ENCODE measurements at regions of chr12 and their contacts with region 1.

Region 1: GRCh38 chr12:49098035-49098451 is 3.4 kb upstream of the DHH start:
- DNase-seq: peak; percentile 50
- H3K4me3 ChIP-seq: no peak overlapping the region
- H3K27ac ChIP-seq: no peak overlapping the region
- H3K4me1 ChIP-seq: 0 out of 2 replicates have a peak, but pooled peaks cover 4% of the 10 kb centered on the region
- H3K27me3 ChIP-seq: peaks cover 18% of the 10 kb centered on the region

Region 2: DNA sequence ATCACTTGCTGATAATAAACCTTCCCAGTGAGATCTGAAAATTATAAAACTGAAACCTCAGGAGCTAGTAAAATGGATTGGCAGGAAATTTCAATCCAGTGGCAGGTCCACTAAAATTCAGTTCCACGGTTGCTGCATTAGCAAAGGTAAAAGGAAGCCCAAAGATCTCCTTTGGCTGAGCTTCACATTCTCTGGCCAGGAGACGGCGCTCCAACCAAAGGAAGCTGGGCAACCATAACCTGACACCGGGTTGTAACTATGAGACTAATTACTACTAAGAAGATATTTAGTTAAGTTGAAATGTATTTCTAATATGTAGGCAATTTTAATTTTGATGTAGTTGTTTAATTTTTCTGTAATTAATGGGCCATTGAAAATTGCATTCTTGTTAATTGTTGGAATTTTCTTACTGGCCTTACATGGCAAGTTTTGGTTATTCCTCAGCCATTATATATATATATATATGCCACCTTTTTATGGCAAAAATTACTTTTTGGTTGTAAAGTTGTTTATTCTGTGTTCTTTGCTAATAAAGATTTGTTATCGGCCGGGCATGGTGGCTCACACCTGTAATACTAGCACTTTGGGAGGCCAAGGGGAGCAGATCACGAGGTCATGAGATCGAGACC is 555.6 kb before region 1 on chr12:
- in situ Hi-C with region 1: no loop called
- DNase-seq: peak; percentile 47
- H3K4me3 ChIP-seq: no peak overlapping the region
- H3K27ac ChIP-seq: no peak overlapping the region
- H3K4me1 ChIP-seq: no peaks in the 10 kb centered on the region
- H3K27me3 ChIP-seq: peaks cover 7% of the 10 kb centered on the region

Region 3: DNA sequence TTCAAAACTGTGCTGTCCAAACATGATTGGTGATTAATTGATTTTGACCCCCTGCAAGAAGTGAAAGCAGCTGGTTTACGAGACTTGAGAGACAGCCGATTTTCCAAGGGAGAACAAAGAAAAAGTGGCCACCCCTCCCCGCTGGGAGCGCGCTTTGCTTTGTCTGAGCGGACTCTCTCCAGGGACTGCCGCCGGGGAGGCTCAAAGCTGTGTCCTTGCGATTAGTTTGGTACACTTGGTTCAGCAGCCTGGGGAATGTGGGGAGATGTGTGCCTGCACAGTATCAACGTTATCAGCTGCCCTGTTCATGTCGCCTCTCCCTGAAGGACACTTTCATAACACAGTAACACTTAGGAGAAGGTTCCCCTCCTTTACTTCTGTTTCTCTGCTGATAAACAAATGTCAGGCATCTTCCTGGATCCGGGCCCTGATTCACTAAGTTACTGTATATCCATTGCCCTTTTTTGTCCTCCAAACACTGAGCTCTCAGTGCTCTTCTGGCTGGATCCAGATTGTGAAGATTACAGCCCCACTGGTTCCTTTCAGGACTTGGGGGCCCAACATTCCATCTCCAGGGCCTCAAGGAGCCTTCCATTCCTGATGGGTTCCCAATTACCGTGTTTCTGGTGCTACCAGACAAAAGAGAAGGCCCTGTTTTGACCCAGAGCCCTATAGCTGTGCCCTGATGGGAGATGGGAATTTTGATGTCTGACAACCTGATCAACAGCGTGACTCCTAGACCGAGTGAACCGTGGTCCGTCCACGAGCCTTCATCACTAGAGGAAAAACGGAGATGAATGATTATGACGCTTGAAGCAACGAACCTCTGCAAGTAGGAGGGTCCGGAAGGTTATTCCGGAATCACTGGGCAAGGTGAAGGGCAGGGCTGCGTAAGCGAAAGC is 135.1 kb after region 1 on chr12:
- in situ Hi-C with region 1: loop called (anchors 10 kb)
- DNase-seq: no peak
- H3K4me3 ChIP-seq: no peak overlapping the region
- H3K27ac ChIP-seq: no peak overlapping the region
- H3K4me1 ChIP-seq: peaks cover 4% of the 10 kb centered on the region; the same call in 1 of the 2 replicates
- H3K27me3 ChIP-seq: no peaks in the 10 kb centered on the region

Region 4: GRCh38 chr12:49331380-49332222 is 233.6 kb after region 1 on chr12:
- in situ Hi-C with region 1: no loop called
- DNase-seq: peak; percentile 85
- H3K4me3 ChIP-seq: no peak overlapping the region
- H3K27ac ChIP-seq: no peak overlapping the region
- H3K4me1 ChIP-seq: no peaks in the 10 kb centered on the region
- H3K27me3 ChIP-seq: peaks cover 29% of the 10 kb centered on the region